GM13977 (cell line): ENCODE measurements at regions of chr6 and their contacts with region 1.

Region 1: DNA sequence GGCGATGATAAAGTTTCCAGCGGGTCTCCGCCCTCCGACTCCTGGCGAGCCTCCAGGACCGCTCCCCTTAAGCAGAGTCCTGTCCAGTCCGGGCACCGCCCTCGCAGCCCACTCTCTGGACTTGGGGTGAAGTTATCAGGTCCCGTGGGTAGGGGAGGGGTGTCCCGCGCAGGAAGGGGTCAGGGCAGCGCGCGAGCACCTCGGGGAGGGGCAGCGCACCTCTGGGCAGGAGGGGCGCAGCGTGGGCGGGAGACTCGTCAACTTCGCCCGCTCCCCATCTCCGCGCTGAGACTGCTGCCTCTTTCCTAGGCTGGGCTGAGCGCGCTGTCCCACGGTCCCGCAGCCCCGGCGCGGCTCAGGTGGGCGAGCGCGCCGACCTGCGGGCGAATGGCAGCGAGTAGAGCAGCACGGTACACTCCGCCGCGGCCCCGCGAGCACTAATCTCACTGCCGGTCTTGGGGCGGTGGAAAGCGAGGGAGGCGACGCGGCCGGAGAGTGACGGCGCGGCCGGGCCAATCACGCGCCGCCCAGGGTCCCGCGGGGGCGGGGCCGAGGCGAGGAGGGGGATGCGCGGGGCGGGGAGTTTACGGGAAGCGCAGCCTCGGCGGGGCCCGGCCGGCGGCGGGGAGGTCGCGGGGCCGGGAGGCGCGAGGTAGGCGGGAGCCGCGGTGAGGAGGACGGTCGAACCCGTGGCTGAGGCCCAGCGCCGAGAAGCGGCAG is at the start of gene MAN1A1:
- DNase-seq: peak; percentile 98
- CTCF ChIP-seq: peak; percentile 33

Region 2: GRCh38 chr6:118146584-118146983 is 1202.9 kb before region 1 on chr6:
- in situ Hi-C with region 1: no loop called
- DNase-seq: no peak
- CTCF ChIP-seq: no peak

Region 3: GRCh38 chr6:119158057-119158848 is 191.2 kb before region 1 on chr6:
- in situ Hi-C with region 1: loop called (anchors 10 kb)
- DNase-seq: no peak
- CTCF ChIP-seq: no peak

Region 4: DNA sequence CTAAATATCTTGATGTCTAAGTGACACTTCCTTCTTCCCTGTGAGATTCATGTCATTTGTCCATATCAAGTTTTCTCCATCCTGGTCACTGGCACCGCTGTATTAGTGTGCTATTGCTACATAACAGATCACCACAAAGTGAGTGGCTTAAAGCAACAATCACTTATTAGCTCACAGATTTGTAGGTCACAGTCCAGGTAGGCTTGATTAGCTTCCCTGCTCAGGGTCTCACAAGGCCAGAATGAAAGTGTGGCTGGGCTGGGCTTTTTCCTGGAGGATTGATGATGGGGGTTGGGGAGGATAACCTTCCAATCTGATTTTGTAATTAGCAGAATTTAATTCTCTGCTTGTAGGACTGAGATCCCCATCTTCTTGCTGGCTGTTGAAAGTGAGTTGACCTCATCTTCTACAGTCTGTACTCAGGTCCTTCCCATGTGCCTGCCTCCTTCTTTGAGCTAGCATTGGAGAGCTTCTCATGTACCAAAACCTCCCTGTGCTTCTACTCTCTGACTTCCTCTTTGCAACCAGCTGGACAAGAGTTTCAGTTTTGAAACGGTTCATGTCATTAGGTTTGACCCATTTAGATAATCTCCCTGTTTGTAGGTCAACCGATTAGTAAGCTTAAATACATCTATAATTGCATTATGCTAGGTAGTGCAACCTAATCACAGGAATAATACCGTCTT is 152.5 kb after region 1 on chr6:
- in situ Hi-C with region 1: no loop called
- DNase-seq: no peak
- CTCF ChIP-seq: no peak

Region 5: DNA sequence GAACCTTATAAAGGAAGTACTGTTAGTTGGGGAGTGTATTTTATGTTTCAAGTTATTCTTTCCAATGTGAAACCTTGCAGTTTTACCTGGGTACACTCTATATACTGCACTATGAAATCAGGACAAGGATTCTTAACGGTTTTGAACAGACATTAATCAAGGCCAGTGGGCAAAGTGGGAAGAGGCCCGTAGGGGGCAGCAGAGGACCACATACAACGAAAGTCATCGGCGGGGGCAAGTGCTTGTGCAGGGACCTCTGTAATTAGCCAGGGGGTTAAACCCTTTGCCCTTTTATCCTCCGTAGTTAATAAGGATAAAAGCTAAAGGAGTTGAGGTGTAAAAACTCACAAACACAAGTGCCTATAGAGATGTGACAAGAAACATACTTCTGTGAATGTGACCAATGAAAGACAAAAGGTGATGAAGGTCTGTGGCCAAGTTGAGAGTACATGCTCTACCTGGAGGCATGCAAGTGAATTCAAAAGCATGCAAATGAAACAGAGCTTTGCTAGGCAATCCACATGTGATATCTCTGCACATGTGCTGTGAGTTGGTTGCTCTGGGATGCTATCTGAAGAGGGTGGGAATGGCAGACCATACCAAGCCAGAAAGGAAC is 392.8 kb after region 1 on chr6:
- in situ Hi-C with region 1: loop called (anchors 25 kb)
- DNase-seq: peak; percentile 21
- CTCF ChIP-seq: peak; percentile 89

Region 6: DNA sequence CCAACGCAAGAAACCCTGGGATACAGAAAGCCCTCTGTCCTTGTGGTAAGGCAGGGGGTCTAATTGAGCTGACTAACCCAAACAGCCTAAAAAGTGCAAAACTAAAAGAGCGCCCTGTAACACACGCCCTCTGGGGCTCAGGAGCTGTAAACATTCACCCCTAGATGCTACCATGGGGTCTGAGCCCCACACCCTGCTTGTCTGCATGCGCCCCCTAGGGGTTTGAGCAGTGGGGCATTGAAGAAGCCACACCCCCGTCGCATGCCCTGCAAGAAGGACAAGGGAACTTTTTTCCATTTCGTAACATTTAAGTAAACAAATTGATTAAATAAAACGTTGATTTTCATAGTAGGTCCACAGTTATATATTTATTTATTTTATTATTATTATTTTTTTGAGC is 617.0 kb after region 1 on chr6:
- in situ Hi-C with region 1: loop called (anchors 25 kb)
- DNase-seq: peak; percentile 5
- CTCF ChIP-seq: peak; percentile 58